Activated CD8-positive, alpha-beta T cell treated with anti-CD3 and anti-CD28 coated beads, Interleukin-2, amount 10 ng/mL, durations not matched to agents 7 days and 5 days (primary cell): ENCODE measurements at regions of chr17 and their contacts with region 1.

Region 1: DNA sequence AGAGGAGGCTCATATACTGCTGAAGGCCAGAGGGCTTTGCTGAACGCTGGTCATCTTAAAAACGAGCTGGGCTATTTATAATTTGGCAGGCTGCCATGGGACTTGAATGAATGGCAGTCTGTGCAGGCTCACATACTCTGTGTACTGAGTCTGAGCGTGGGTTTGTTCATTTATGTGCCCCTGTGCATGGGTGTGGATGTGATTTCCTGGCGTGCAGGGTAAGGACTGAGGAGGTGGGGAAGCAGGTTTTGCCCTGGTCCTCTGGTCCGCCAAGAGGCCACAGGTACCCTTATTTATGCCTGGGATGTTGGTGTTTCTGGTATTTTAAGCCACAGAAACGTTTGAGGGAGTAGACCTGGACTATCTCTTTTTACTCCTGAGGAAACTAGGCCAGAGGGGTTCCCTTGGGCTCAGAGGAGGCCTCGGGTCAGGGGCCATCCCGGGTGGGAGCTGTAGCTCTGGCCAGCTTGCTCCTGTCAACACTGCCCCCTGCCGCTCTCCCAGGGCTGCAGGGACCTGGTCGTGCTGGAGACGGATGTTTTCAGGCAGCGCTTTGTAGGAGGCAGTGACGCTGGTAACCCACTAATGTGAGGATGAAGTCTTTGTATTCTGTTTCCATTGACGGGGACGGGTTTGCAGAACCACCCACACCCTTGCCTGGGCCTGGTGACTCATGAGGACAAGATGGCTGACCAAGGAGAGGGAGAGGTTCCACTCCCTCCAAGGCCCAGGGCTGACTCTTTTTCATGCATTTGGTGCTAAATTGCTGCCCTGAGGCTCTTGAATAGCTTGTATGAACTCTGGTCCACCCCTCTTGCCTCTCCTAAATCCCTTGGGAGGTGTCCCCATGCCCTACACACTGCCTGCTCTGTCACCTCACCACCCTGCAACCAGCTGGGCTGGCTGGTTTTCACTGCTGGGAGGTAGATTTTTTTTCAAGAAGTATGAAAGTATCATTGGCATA is 184.5 kb downstream of the MSI2 start:
- DNase-seq: peak; percentile 81
- ATAC-seq: peak; percentile 81
- H3K4me3 Mint-ChIP-seq: peak overlapping the region; percentile 20
- H3K27ac Mint-ChIP-seq: peak overlapping the region; percentile 93
- H3K4me1 Mint-ChIP-seq: peaks cover 79% of the 10 kb centered on the region
- H3K27me3 Mint-ChIP-seq: no peaks in the 10 kb centered on the region

Region 2: GRCh38 chr17:57379237-57379894 is 61.4 kb before region 1 on chr17:
- CTCF ChIA-PET with region 1: no interaction called
- POLR2A ChIA-PET with region 1: no interaction called
- DNase-seq: no peak
- ATAC-seq: no peak
- H3K4me3 Mint-ChIP-seq: no peak overlapping the region
- H3K27ac Mint-ChIP-seq: no peak overlapping the region
- H3K4me1 Mint-ChIP-seq: peaks cover 21% of the 10 kb centered on the region
- H3K27me3 Mint-ChIP-seq: no peaks in the 10 kb centered on the region

Region 3: GRCh38 chr17:57408071-57408811 is 32.6 kb before region 1 on chr17:
- CTCF ChIA-PET with region 1: interaction called, 32 read pairs
- POLR2A ChIA-PET with region 1: interaction called, 3 read pairs
- DNase-seq: peak; percentile 72
- ATAC-seq: peak; percentile 73
- H3K4me3 Mint-ChIP-seq: peak overlapping the region; percentile 59
- H3K27ac Mint-ChIP-seq: peak overlapping the region; percentile 73
- H3K4me1 Mint-ChIP-seq: peaks cover 52% of the 10 kb centered on the region
- H3K27me3 Mint-ChIP-seq: no peaks in the 10 kb centered on the region

Region 4: DNA sequence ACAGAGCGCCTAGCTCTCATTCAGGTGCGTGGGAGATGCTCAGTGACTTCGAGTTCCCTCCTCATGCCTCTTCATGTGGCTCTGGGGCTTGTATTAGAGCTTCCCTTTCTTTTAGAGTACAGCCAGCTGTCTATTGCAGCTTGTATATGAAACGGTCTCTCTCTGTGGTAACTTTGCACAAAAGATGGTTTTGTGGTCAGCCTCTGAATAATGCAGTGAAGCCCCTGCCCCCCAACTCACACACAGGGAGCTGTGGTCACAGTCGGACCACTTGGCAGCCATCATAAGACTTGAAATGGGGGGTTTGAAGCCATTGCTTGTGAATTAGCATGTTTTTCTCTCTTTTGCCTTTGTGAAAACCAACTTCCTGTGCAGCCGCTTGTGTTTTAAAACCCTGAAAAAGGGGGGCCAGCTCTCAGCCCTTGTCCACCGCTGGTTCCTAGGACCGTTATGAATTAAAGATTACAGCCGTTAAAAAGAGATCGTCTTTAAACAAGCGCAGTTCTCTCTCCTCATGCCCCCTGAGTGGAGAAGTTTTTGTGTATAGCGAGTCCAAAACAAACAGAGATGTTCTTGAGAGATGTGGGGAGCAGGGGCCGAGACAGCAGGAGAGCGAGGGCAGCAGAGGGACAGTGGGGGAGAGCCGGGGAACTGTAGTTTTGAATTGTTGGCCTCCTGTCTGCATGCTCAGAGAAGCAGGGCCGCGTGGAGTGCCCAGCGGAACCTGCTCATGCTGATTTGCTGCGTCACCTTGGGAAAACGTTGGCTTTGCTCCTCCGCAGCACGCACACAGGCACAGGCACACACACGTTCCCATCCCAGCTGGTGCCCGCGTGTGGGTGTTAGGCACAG is 14.5 kb after region 1 on chr17:
- CTCF ChIA-PET with region 1: interaction called, 33 read pairs
- POLR2A ChIA-PET with region 1: interaction called, 35 read pairs
- DNase-seq: peak; percentile 86
- ATAC-seq: peak; percentile 85
- H3K4me3 Mint-ChIP-seq: peak overlapping the region; percentile 57
- H3K27ac Mint-ChIP-seq: peak overlapping the region; percentile 87
- H3K4me1 Mint-ChIP-seq: peaks cover 79% of the 10 kb centered on the region
- H3K27me3 Mint-ChIP-seq: no peaks in the 10 kb centered on the region

Region 5: DNA sequence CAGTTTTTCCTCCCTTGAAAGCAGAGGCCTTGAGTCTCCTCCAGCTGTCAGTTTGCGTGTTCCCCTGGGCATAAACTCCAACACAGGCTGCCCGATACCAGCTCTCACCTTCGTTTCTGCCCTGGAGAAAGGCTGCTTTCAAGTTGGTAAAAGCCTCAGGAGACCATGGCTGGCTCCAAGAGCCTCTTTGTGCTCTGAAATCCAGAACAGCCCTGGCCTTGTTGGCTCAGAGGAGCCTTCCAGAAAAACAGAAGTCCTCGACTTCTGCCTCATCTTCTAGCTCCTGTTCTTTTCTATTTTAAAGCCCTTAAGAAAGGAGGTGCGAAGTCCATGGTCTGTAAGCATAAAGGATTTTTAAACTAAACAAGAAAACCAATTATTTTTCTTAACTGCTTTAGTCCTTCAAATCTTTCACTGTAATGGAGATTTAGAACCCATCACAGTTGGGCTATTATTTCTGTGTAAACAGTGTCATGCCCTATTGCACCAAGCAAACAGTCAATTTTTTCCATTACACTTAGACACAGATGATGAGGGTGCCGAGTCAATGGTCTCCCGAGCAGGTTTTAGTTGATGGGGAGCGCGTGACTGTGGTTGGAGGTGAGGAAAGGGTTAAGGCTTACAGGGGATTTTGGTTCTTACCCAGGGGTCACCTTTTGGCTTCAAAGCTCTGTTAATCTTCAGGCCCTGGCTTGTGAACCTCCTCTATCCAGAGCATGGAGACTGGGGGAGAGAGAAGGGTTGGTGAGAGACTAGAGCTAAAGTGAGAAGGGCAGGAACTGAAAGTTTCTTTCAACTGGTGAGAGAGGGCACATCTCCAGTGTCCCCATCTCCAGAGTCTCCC is 28.4 kb after region 1 on chr17:
- CTCF ChIA-PET with region 1: interaction called, 11 read pairs
- POLR2A ChIA-PET with region 1: no interaction called
- DNase-seq: no peak
- ATAC-seq: no peak
- H3K4me3 Mint-ChIP-seq: no peak overlapping the region
- H3K27ac Mint-ChIP-seq: no peak overlapping the region
- H3K4me1 Mint-ChIP-seq: peaks cover 8% of the 10 kb centered on the region
- H3K27me3 Mint-ChIP-seq: no peaks in the 10 kb centered on the region